ENCODE measurements at regions of chr2 and their contacts with region 1.

Region 1: GRCh38 chr2:150487537-150488429 is at the start of gene RND3:
- DNase-seq: peak; percentile 98
- H3K4me3 ChIP-seq: peak within 1 kb of the TSS; percentile 85 to 96 (median 93)
- H3K27ac ChIP-seq: peak within 1 kb of the TSS; percentile 99
- H3K4me1 ChIP-seq: peaks cover 14% of the 10 kb centered on the region
- H3K27me3 ChIP-seq: no peaks in the 10 kb centered on the region
- CTCF ChIP-seq: peak; percentile 86 to 90
- total RNA-seq, gene RND3: 146 to 178 TPM

Region 2: GRCh38 chr2:150188177-150188576 is 299.6 kb before region 1 on chr2:
- CTCF ChIA-PET with region 1: no interaction called
- dilution Hi-C with region 1: no loop called
- in situ Hi-C with region 1: no loop called
- intact Hi-C with region 1: loop called (anchors 5 kb)
- DNase-seq: peak; percentile 37
- H3K4me3 ChIP-seq: no peak overlapping the region
- H3K27ac ChIP-seq: peak overlapping the region; percentile 14
- H3K4me1 ChIP-seq: peaks cover 21% of the 10 kb centered on the region
- H3K27me3 ChIP-seq: no peaks in the 10 kb centered on the region
- CTCF ChIP-seq: peak in 1 of 2 donors; percentile 35

Region 3: DNA sequence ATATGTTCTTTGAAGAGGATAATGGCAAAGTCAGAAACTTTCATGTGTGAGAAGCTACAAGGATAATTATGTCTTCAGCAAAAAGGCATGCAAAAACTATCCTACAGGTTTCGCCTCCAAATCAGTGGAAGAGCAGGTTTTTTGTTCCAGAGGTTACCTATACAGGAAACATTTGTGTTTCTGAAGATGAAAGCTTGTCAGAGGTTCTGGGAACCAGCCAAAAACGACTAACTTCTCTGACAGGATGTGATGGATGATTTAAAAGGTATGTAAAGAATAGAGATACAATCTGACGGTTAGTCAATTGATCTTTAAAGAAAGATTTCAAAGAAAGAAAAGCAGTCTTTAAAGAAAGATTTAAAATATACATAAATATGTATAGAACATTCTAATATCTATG is 37.9 kb before region 1 on chr2:
- CTCF ChIA-PET with region 1: no interaction called
- dilution Hi-C with region 1: no loop called
- in situ Hi-C with region 1: no loop called
- intact Hi-C with region 1: no loop called
- DNase-seq: peak; percentile 71
- H3K4me3 ChIP-seq: no peak overlapping the region
- H3K27ac ChIP-seq: no peak overlapping the region
- H3K4me1 ChIP-seq: peaks cover 5% of the 10 kb centered on the region
- H3K27me3 ChIP-seq: no peaks in the 10 kb centered on the region
- CTCF ChIP-seq: no peak

Region 4: DNA sequence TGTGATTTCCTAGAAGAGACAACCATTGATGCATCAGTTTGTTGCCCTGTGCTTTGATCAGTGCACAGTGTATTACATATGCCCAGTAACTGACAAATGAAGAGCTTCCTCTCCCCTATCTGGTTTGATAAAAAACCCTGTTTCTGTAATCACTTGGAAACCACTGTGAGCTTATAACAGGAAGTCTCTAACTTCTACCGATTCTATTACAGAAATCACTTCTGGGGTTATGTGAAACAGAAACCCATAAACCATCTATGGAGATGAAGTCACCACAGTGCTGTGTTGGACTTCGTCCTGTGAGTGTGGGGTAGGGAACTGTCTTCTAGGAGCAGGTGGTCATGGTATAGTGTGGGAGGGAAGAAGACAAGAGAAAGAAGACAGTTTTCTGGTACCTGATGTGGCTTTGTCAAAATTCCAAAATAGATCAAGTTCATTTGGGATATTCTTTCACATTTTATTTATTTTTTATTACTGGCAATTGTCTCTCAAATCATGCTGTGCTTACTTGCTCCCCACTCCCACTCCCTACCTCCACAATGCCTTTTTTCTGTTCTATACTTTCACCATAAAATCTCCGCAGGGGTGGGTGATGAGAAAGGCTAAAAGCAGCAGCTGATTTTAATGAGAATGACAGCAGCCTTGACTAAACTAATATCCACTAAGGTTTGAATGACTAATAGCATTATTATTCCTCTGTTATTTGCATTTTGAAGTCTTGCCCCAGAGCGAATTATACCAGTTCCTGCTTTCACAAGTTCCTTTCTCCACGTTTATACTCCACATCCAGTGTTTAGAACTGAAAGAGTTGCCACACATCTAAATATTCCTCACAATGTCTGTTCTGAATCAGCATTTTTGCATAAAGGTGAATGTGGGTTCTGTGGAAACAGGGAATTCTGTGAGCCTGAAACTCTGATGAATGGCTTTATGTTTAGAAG is 41.3 kb after region 1 on chr2:
- CTCF ChIA-PET with region 1: no interaction called
- dilution Hi-C with region 1: loop called (anchors 5 kb)
- in situ Hi-C with region 1: loop called (anchors 5 kb)
- intact Hi-C with region 1: loop called (anchors 1 kb)
- DNase-seq: peak; percentile 95
- H3K4me3 ChIP-seq: no peak overlapping the region
- H3K27ac ChIP-seq: peak overlapping the region; percentile 95
- H3K4me1 ChIP-seq: peaks cover 54% of the 10 kb centered on the region
- H3K27me3 ChIP-seq: no peaks in the 10 kb centered on the region
- CTCF ChIP-seq: no peak

Region 5: GRCh38 chr2:150610671-150611279 is 123.0 kb after region 1 on chr2:
- CTCF ChIA-PET with region 1: interaction called, 5 read pairs
- dilution Hi-C with region 1: no loop called
- in situ Hi-C with region 1: loop called (anchors 5 to 25 kb)
- intact Hi-C with region 1: loop called (anchors 1 kb)
- DNase-seq: peak; percentile 70
- H3K4me3 ChIP-seq: no peak overlapping the region
- H3K27ac ChIP-seq: no peak overlapping the region
- H3K4me1 ChIP-seq: no peaks in the 10 kb centered on the region
- H3K27me3 ChIP-seq: no peaks in the 10 kb centered on the region
- CTCF ChIP-seq: peak; percentile 69 to 87

Region 6: DNA sequence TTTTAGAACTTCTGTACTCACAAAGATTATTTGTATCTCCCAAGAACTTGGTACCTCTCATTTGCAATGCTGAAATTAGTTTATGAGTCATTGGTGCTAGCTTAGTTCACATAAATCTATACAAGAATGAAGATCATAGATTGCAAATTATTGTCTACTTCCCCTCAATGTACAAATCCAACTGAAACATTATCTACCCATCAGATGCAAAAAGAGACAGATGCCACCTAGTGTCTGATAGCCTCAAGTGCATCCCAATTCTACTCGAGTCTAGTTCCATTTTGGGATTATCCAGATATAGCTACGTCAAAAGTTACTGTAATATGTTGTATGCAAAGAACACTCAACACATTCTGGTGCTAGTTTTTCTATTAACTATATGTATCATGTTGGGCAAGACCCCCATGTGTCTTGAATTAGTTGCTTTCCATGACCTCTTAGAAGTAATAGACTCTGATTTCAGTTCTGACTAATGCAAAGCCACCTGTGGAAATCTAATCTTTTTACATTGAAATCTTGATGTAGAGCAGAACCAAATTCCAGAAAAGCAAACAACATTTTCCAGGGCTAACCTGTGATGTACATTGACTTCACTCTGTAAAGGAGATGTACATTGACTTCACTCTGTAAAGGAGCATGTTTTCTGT is 563.9 kb after region 1 on chr2:
- CTCF ChIA-PET with region 1: no interaction called
- dilution Hi-C with region 1: no loop called
- in situ Hi-C with region 1: loop called in 1 of 2 experiments (anchors 25 kb)
- intact Hi-C with region 1: loop called (anchors 2 kb)
- DNase-seq: peak; percentile 60
- H3K4me3 ChIP-seq: no peak overlapping the region
- H3K27ac ChIP-seq: no peak overlapping the region
- H3K4me1 ChIP-seq: peaks cover 29% of the 10 kb centered on the region
- H3K27me3 ChIP-seq: no peaks in the 10 kb centered on the region
- CTCF ChIP-seq: peak; percentile 85 to 86

Region 7: DNA sequence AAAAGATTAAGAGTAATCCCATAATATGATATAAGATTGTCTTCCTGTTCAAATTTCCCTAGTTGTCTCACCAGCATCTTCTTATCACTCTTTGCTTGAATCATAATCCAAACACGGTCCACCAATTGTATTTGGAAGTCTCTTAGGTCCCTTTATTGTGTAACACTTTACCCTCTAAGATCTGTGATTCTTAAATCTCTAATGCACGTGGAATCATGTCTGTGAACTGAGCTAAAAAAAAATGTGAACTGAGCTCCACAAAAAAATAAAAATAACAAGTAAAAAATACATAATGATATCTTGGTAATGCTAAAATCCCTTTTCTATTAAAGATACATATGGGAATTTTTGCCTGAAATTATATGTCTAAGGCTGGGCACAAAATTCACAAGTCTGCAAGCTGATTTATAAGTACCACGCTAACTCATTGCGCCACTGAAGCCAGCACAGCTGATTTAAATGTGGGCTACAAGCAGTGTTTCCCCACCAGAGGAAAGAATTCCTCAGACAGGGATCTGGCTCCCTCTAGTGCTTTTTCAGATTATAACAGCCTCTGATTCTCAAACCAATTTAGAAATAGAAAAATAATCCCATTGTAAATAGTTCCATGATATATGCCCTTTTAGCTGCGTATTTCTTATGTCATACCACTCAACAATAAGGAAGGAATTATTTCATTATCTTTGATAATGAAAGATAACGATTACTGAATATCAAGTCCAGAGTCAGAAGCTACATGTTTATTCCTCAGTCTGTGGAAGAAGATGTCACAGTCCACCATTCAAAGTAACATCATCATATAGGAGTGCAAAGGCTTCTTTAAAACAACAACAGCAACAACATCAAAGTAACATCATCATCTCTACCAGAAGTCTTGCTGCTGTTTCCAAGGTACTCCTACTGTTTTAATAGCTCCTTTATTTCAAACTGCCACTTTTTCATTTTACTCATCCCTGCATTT is 751.0 kb after region 1 on chr2:
- CTCF ChIA-PET with region 1: no interaction called
- dilution Hi-C with region 1: no loop called
- in situ Hi-C with region 1: loop called in 1 of 2 experiments (anchors 10 kb)
- intact Hi-C with region 1: loop called (anchors 2 kb)
- DNase-seq: peak; percentile 51
- H3K4me3 ChIP-seq: no peak overlapping the region
- H3K27ac ChIP-seq: no peak overlapping the region
- H3K4me1 ChIP-seq: peaks cover 7% of the 10 kb centered on the region
- H3K27me3 ChIP-seq: no peaks in the 10 kb centered on the region
- CTCF ChIP-seq: peak; percentile 75 to 79

Measured in mammary epithelial cell (primary cell).